Endothelial cell of umbilical vein (primary cell): ENCODE measurements at regions of chr1 and their contacts with region 1.

Region 1: DNA sequence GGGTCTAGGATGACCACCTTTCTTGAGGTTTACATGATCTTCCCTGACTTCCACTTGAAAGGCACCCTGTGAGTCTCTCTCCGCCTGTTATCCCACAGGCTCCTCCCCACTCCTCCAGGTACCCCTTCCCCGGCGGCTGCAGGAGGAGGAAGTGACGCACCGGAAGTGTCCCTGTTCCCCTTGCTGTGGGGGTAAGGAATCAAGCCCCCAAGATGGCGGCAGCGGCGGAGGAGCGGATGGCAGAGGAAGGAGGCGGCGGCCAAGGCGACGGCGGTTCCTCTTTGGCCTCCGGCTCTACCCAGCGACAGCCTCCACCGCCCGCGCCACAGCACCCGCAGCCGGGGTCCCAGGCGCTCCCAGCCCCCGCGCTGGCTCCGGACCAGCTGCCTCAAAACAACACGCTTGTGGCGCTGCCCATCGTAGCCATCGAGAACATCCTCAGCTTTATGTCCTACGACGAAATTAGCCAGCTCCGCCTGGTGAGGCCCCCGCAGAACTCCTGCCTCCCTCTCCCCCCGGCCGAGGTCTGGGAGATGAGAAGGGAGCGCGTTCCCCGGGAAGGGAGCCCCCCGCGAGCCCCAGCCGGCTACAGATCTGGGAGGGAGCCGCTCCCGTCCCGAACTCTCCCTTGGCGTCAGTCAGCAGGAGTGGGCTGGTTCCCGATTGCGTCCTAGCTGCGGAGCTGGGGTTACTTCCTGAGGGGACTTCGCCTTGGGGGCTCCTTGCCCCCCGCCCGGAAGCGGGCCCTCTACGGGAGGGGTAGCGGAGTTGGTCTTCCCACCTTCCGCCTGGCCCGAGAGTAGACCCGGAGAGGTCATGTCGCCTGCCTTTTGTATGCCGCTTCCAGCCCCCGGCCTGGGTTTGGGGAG is at the start of gene FBXO28:
- DNase-seq: peak; percentile 92
- H3K4me3 ChIP-seq: peak within 1 kb of the TSS; percentile 62 to 99 (median 97)
- H3K27ac ChIP-seq: peak within 1 kb of the TSS; percentile 78
- H3K4me1 ChIP-seq: peaks cover 21% of the 10 kb centered on the region
- H3K27me3 ChIP-seq: no peaks in the 10 kb centered on the region
- CTCF ChIP-seq: no peak
- POLR2A ChIP-seq: peak; percentile 95
- total RNA-seq, gene FBXO28: 32.6 and 35.4 TPM in 2 replicates

Region 2: GRCh38 chr1:223700942-223701637 is 413.1 kb before region 1 on chr1:
- CTCF ChIA-PET with region 1: interaction called, 4 read pairs
- POLR2A ChIA-PET with region 1: no interaction called
- dilution Hi-C with region 1: no loop called
- intact Hi-C with region 1: loop called (anchors 1 kb)
- DNase-seq: peak; percentile 74
- H3K4me3 ChIP-seq: no peak overlapping the region
- H3K27ac ChIP-seq: peak overlapping the region; percentile 73
- H3K4me1 ChIP-seq: peaks cover 37% of the 10 kb centered on the region
- H3K27me3 ChIP-seq: no peaks in the 10 kb centered on the region
- CTCF ChIP-seq: no peak
- POLR2A ChIP-seq: peak; percentile 26

Region 3: DNA sequence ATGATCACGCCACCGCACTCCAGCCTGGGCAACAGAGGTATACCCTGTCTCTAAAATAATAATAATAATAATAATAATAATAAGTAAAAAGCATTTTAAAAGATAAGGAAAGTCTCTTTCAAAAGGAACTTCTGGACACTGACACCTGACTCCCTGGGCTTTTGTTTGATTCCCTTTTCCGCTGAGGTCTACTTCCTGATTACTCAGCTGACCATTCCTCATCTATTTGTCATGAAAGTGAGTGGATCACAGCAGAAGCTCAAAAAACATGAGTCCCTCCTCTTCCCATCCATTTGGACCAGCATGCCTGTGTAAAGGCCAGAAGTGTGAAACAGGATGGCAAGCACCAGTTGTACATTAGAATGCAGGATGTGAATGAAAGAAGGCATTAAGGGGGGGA is 61.4 kb before region 1 on chr1:
- CTCF ChIA-PET with region 1: interaction called, 62 read pairs
- POLR2A ChIA-PET with region 1: no interaction called
- dilution Hi-C with region 1: no loop called
- intact Hi-C with region 1: loop called (anchors 2 kb)
- DNase-seq: peak; percentile 96
- H3K4me3 ChIP-seq: no peak overlapping the region
- H3K27ac ChIP-seq: peak overlapping the region; percentile 92
- H3K4me1 ChIP-seq: peaks cover 37% of the 10 kb centered on the region
- H3K27me3 ChIP-seq: no peaks in the 10 kb centered on the region
- CTCF ChIP-seq: no peak
- POLR2A ChIP-seq: peak; percentile 24

Region 4: GRCh38 chr1:224300314-224300713 is 186.2 kb after region 1 on chr1:
- CTCF ChIA-PET with region 1: interaction called, 11 read pairs
- POLR2A ChIA-PET with region 1: no interaction called
- dilution Hi-C with region 1: no loop called
- intact Hi-C with region 1: no loop called
- DNase-seq: peak; percentile 66
- H3K4me3 ChIP-seq: no peak overlapping the region
- H3K27ac ChIP-seq: peak overlapping the region; percentile 41
- H3K4me1 ChIP-seq: peaks cover 5% of the 10 kb centered on the region
- H3K27me3 ChIP-seq: no peaks in the 10 kb centered on the region
- CTCF ChIP-seq: no peak
- POLR2A ChIP-seq: no peak

Region 5: DNA sequence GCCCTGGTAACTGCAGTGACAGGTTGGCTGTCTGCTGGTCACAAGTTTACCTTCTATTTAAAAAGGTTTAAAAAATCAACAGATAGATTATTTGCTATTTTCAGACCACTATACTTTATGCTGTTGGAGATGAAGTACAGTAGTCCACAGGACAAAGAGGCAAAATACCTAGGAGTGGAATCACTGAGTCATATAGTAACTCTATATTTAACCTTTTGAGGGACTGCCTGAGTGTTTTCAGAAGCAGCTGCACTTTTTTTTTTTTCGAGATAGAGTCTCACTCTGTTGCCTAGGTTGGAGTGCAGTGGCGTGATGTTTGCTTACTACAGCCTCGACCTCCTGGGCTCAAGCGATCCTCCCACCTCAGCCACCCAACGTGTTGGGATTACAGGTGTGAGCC is 254.3 kb after region 1 on chr1:
- CTCF ChIA-PET with region 1: interaction called, 11 read pairs
- POLR2A ChIA-PET with region 1: no interaction called
- dilution Hi-C with region 1: no loop called
- intact Hi-C with region 1: no loop called
- DNase-seq: no peak
- H3K4me3 ChIP-seq: no peak overlapping the region
- H3K27ac ChIP-seq: no peak overlapping the region
- H3K4me1 ChIP-seq: no peaks in the 10 kb centered on the region
- H3K27me3 ChIP-seq: no peaks in the 10 kb centered on the region
- CTCF ChIP-seq: no peak
- POLR2A ChIP-seq: no peak

Region 6: GRCh38 chr1:224922404-224923164 is 808.4 kb after region 1 on chr1:
- CTCF ChIA-PET with region 1: interaction called, 10 read pairs
- POLR2A ChIA-PET with region 1: no interaction called
- dilution Hi-C with region 1: no loop called
- intact Hi-C with region 1: loop called (anchors 5 kb)
- DNase-seq: peak; percentile 24
- H3K4me3 ChIP-seq: no peak overlapping the region
- H3K27ac ChIP-seq: no peak overlapping the region
- H3K4me1 ChIP-seq: no peaks in the 10 kb centered on the region
- H3K27me3 ChIP-seq: peaks cover 0 to 4% of the 10 kb centered on the region in 2 experiments
- CTCF ChIP-seq: peak; percentile 44 to 45
- POLR2A ChIP-seq: no peak